ENCODE measurements at regions of chr14 and their contacts with region 1.

Region 1: GRCh38 chr14:106665814-106666213 is 1139.4 kb downstream of the TMEM121 start:
- DNase-seq: peak in 4 of 9 experiments; percentile 21 to 60 (median 40)
- ATAC-seq: no peak
- H3K4me3 ChIP-seq: no peak overlapping the region
- H3K4me3 Mint-ChIP-seq: no peak overlapping the region
- H3K27ac ChIP-seq: no peak overlapping the region
- H3K27ac Mint-ChIP-seq: no peak overlapping the region
- H3K4me1 ChIP-seq: peaks cover 7% of the 10 kb centered on the region
- H3K4me1 Mint-ChIP-seq: peaks cover 16% of the 10 kb centered on the region
- H3K27me3 ChIP-seq: no peaks in the 10 kb centered on the region
- H3K27me3 Mint-ChIP-seq: peaks cover 4% of the 10 kb centered on the region
- CTCF ChIP-seq: no peak

Region 2: DNA sequence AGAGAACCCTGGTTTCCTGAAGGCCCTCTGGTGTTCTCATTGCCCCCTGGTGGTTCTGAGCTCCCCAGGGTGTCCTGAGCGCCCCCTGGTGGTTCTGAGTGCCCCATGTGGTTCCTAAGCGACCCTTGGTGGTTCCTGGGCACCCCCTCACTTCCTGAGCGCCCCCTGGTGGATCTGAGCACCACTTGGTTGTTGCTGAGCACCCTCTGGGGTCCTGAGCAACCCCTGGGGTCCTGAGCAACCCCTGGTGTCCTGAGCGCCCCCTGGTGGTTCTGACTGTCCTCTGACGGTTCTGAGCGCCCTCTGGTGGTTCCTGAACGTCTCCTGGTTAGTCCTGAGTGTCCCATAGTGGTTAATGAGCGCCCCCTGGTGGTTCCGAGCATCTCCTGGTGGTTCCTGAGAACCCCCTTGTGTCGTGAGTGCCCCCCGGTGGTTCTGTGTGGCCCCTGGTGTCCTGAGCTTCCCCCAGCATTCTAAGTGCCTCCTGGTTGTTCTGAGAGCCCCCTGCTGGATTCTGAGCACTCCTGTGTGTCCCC is 571.1 kb before region 1 on chr14:
- CTCF ChIA-PET with region 1: no interaction called
- POLR2A ChIA-PET with region 1: no interaction called
- intact Hi-C with region 1: no loop called
- DNase-seq: peak in 3 of 9 experiments; percentile 26 to 72 (median 68)
- ATAC-seq: no peak
- H3K4me3 ChIP-seq: no peak overlapping the region
- H3K4me3 Mint-ChIP-seq: no peak overlapping the region
- H3K27ac ChIP-seq: no peak overlapping the region
- H3K27ac Mint-ChIP-seq: no peak overlapping the region
- H3K4me1 ChIP-seq: no peaks in the 10 kb centered on the region
- H3K4me1 Mint-ChIP-seq: no peaks in the 10 kb centered on the region
- H3K27me3 ChIP-seq: no peaks in the 10 kb centered on the region
- H3K27me3 Mint-ChIP-seq: no peaks in the 10 kb centered on the region
- CTCF ChIP-seq: no peak

Region 3: DNA sequence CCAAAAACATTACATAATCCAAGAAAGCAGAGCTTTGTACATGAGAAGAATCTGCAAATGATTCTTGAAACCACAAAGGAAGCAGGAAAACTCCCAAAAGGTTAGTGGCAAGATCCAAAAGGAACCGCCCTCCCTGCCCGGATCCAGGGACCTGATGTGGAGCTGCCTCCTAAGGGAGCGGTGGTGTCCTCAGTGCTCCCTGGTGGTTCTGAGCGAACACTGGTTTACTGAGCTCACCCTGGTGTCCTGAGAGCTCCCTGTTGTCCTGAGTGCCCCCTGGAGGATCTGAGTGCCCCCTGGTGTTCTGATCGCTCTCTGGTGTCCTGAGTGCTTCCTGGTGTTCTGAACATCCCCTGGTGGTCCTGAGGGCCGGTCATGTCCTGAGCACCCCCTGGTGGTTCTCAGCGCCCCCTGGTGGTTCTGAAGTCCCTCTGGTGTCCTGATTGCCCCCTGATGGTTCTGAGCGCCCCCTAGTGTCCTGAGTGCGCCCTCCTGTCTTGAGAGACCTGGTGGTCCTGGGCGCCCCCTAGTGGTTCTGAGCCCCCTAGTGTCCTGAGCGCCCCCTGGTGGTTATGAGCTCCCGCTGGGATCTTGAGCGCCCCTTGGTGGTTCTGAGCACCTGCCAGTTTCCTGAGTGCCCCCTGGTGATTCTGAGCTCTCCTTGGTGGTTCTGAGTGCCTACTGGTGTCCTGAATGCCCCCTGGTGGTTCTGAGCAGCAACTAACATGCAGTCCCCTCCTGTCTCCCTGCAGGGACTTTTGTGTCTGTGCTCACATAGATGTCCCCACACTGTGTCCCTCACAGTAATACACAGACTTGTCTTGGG is 248.4 kb before region 1 on chr14:
- CTCF ChIA-PET with region 1: no interaction called
- POLR2A ChIA-PET with region 1: no interaction called
- intact Hi-C with region 1: loop called in 1 of 2 experiments (anchors 10 kb)
- DNase-seq: peak; percentile 45 to 92 (median 76)
- ATAC-seq: peak; percentile 87
- H3K4me3 ChIP-seq: no peak overlapping the region
- H3K4me3 Mint-ChIP-seq: no peak overlapping the region
- H3K27ac ChIP-seq: no peak overlapping the region
- H3K27ac Mint-ChIP-seq: no peak overlapping the region
- H3K4me1 ChIP-seq: peaks cover 3% of the 10 kb centered on the region
- H3K4me1 Mint-ChIP-seq: peaks cover 4% of the 10 kb centered on the region
- H3K27me3 ChIP-seq: peaks cover 0 to 3% of the 10 kb centered on the region in 2 experiments
- H3K27me3 Mint-ChIP-seq: no peaks in the 10 kb centered on the region
- CTCF ChIP-seq: peak; percentile 97

Region 4: DNA sequence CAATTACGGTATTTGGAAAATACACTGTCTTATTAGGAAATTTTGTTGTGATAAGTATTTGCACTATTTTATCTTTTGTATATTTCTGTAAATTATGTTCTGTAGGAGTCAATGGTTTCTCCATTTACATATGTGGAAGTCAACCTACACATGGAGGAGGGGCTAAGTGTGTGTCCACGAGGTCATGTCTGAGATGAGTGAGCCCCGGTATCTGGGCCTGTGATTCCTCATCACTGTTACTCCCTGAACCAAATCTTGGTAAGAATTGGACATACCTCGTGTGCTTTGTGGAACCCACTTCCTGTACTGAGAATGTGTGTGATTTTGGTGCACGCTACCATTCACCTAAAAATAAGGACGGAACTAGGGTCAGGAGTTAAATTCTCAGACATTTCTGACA is 33.9 kb before region 1 on chr14:
- CTCF ChIA-PET with region 1: no interaction called
- POLR2A ChIA-PET with region 1: no interaction called
- intact Hi-C with region 1: no loop called
- DNase-seq: no peak
- ATAC-seq: no peak
- H3K4me3 ChIP-seq: no peak overlapping the region
- H3K4me3 Mint-ChIP-seq: no peak overlapping the region
- H3K27ac ChIP-seq: no peak overlapping the region
- H3K27ac Mint-ChIP-seq: no peak overlapping the region
- H3K4me1 ChIP-seq: peaks cover 4% of the 10 kb centered on the region
- H3K4me1 Mint-ChIP-seq: peaks cover 2% of the 10 kb centered on the region
- H3K27me3 ChIP-seq: peaks cover 0 to 2% of the 10 kb centered on the region in 2 experiments
- H3K27me3 Mint-ChIP-seq: peaks cover 14% of the 10 kb centered on the region
- CTCF ChIP-seq: no peak

Region 5: GRCh38 chr14:106691601-106692291 is 25.9 kb after region 1 on chr14:
- CTCF ChIA-PET with region 1: interaction called, 18 read pairs
- POLR2A ChIA-PET with region 1: no interaction called
- intact Hi-C with region 1: no loop called
- DNase-seq: peak in 7 of 9 experiments; percentile 22 to 77 (median 69)
- ATAC-seq: peak; percentile 18
- H3K4me3 ChIP-seq: no peak overlapping the region
- H3K4me3 Mint-ChIP-seq: no peak overlapping the region
- H3K27ac ChIP-seq: no peak overlapping the region
- H3K27ac Mint-ChIP-seq: no peak overlapping the region
- H3K4me1 ChIP-seq: no peaks in the 10 kb centered on the region
- H3K4me1 Mint-ChIP-seq: peaks cover 24% of the 10 kb centered on the region
- H3K27me3 ChIP-seq: no peaks in the 10 kb centered on the region
- H3K27me3 Mint-ChIP-seq: no peaks in the 10 kb centered on the region
- CTCF ChIP-seq: peak; percentile 15

Region 6: DNA sequence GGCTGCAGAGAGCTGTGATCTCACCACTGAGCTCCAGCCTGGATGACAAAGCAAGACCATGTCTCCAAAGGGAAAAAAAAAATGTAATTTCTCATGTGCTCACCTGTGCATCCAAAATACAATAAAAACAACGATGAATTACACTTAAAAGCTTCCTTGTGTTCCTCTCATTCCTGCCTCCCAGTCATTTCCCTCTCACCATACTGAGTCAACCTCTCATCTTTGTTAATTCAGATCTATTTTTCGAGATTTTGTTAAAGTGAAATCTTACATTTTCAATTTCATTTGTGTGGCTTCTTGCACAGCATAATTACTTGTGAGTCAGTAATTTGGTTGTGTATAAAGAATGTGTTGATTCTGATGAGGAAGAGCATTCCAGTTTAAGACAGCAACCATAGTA is 63.7 kb after region 1 on chr14:
- CTCF ChIA-PET with region 1: interaction called, 12 read pairs
- POLR2A ChIA-PET with region 1: no interaction called
- intact Hi-C with region 1: no loop called
- DNase-seq: no peak
- ATAC-seq: no peak
- H3K4me3 ChIP-seq: no peak overlapping the region
- H3K4me3 Mint-ChIP-seq: no peak overlapping the region
- H3K27ac ChIP-seq: no peak overlapping the region
- H3K27ac Mint-ChIP-seq: no peak overlapping the region
- H3K4me1 ChIP-seq: no peaks in the 10 kb centered on the region
- H3K4me1 Mint-ChIP-seq: peaks cover 26% of the 10 kb centered on the region
- H3K27me3 ChIP-seq: no peaks in the 10 kb centered on the region
- H3K27me3 Mint-ChIP-seq: no peaks in the 10 kb centered on the region
- CTCF ChIP-seq: no peak

Region 7: DNA sequence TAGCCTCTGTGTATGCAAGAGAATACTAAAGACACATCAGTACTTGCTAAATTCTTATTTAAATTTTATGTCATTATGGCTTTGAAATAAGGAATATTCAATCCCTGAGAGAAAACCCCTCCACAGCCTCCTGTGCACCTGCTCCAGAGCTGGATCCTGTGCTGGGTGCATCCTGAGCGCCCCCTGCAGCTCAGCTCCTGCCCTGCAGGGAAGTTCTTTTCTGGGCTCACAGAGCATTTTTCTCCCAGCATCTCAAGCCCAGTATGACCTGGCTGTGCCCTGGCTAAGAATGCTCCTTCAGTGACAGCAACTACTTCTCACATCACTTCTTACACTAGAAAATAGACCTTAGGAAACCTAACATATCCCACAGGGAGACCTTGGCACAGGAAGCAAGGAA is 72.3 kb after region 1 on chr14:
- CTCF ChIA-PET with region 1: interaction called, 11 read pairs
- POLR2A ChIA-PET with region 1: no interaction called
- intact Hi-C with region 1: no loop called
- DNase-seq: peak in 4 of 9 experiments; percentile 44 to 63 (median 56)
- ATAC-seq: no peak
- H3K4me3 ChIP-seq: no peak overlapping the region
- H3K4me3 Mint-ChIP-seq: no peak overlapping the region
- H3K27ac ChIP-seq: no peak overlapping the region
- H3K27ac Mint-ChIP-seq: no peak overlapping the region
- H3K4me1 ChIP-seq: no peaks in the 10 kb centered on the region
- H3K4me1 Mint-ChIP-seq: peaks cover 21% of the 10 kb centered on the region
- H3K27me3 ChIP-seq: no peaks in the 10 kb centered on the region
- H3K27me3 Mint-ChIP-seq: no peaks in the 10 kb centered on the region
- CTCF ChIP-seq: peak; percentile 54

Measured in CD8-positive, alpha-beta T cell (primary cell).